Caco-2 (cell line): ENCODE measurements at regions of chrX and their contacts with region 1.

Region 1: GRCh38 chrX:31266172-31267076 is 194.6 kb upstream of the FTHL17 start:
- DNase-seq: peak; percentile 47 to 67
- H3K4me3 ChIP-seq: peak overlapping the region; percentile 82
- H3K4me3 Mint-ChIP-seq: peak overlapping the region; percentile 85
- H3K27ac Mint-ChIP-seq: peak overlapping the region; percentile 73
- H3K4me1 ChIP-seq: no peaks in the 10 kb centered on the region
- H3K4me1 Mint-ChIP-seq: peaks cover 11% of the 10 kb centered on the region
- H3K27me3 ChIP-seq: no peaks in the 10 kb centered on the region
- H3K27me3 Mint-ChIP-seq: no peaks in the 10 kb centered on the region
- CTCF ChIP-seq: no peak

Region 2: GRCh38 chrX:30992381-30992904 is 274.0 kb before region 1 on chrX:
- CTCF ChIA-PET with region 1: no interaction called
- POLR2A ChIA-PET with region 1: no interaction called
- intact Hi-C with region 1: no loop called
- DNase-seq: no peak
- H3K4me3 ChIP-seq: no peak overlapping the region
- H3K4me3 Mint-ChIP-seq: no peak overlapping the region
- H3K27ac Mint-ChIP-seq: no peak overlapping the region
- H3K4me1 ChIP-seq: no peaks in the 10 kb centered on the region
- H3K4me1 Mint-ChIP-seq: no peaks in the 10 kb centered on the region
- H3K27me3 ChIP-seq: no peaks in the 10 kb centered on the region
- H3K27me3 Mint-ChIP-seq: no peaks in the 10 kb centered on the region
- CTCF ChIP-seq: no peak

Region 3: DNA sequence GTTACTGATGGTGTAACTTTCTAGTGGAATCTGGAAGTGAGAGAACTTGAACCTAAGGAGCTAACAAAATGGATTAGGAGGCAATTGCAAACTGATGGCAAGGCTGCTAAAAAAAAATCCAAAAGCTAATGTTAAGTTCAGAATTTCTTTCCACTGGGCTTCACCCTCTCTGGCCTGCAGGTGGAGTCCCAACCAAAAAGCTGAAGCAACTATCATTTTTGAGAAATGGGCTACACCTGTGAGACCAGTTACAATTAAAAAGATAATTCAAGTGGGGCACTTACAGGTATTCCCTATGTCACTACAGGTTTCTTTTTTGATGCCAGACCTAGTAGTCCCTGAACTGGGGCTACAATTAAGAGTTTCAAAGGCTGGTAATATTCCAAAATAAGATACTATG is 52.5 kb before region 1 on chrX:
- CTCF ChIA-PET with region 1: no interaction called
- POLR2A ChIA-PET with region 1: no interaction called
- intact Hi-C with region 1: loop called (anchors 5 kb)
- DNase-seq: peak in 1 of 2 experiments; percentile 25
- H3K4me3 ChIP-seq: no peak overlapping the region
- H3K4me3 Mint-ChIP-seq: no peak overlapping the region
- H3K27ac Mint-ChIP-seq: no peak overlapping the region
- H3K4me1 ChIP-seq: no peaks in the 10 kb centered on the region
- H3K4me1 Mint-ChIP-seq: peaks cover 13% of the 10 kb centered on the region
- H3K27me3 ChIP-seq: no peaks in the 10 kb centered on the region
- H3K27me3 Mint-ChIP-seq: no peaks in the 10 kb centered on the region
- CTCF ChIP-seq: peak; percentile 36 to 62

Region 4: GRCh38 chrX:31223817-31224216 is 42.6 kb before region 1 on chrX:
- CTCF ChIA-PET with region 1: no interaction called
- POLR2A ChIA-PET with region 1: no interaction called
- intact Hi-C with region 1: loop called (anchors 2 kb)
- DNase-seq: no peak
- H3K4me3 ChIP-seq: no peak overlapping the region
- H3K4me3 Mint-ChIP-seq: no peak overlapping the region
- H3K27ac Mint-ChIP-seq: no peak overlapping the region
- H3K4me1 ChIP-seq: peaks cover 23% of the 10 kb centered on the region
- H3K4me1 Mint-ChIP-seq: peaks cover 9% of the 10 kb centered on the region
- H3K27me3 ChIP-seq: no peaks in the 10 kb centered on the region
- H3K27me3 Mint-ChIP-seq: no peaks in the 10 kb centered on the region
- CTCF ChIP-seq: no peak

Region 5: DNA sequence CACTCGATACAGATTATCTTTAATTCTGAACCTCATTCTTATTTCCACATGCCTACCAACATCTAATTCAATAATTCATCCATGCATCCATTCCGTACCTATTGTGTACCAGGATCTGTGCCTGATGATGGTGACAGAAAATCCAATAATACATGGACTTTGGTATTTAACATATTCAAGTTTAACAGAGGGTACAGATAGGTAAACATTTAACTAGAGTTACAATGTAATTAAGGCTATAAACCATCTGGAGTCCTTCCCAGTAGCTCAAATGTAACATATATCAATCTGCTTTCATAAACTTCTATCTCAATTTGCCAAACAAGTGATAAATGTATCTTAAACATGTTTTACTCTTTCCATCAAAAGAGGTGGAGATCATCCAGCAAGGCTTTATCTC is 366.9 kb after region 1 on chrX:
- CTCF ChIA-PET with region 1: no interaction called
- POLR2A ChIA-PET with region 1: no interaction called
- intact Hi-C with region 1: loop called (anchors 10 kb)
- DNase-seq: no peak
- H3K4me3 ChIP-seq: no peak overlapping the region
- H3K4me3 Mint-ChIP-seq: no peak overlapping the region
- H3K27ac Mint-ChIP-seq: no peak overlapping the region
- H3K4me1 ChIP-seq: no peaks in the 10 kb centered on the region
- H3K4me1 Mint-ChIP-seq: no peaks in the 10 kb centered on the region
- H3K27me3 ChIP-seq: no peaks in the 10 kb centered on the region
- H3K27me3 Mint-ChIP-seq: no peaks in the 10 kb centered on the region
- CTCF ChIP-seq: no peak